Activated CD8-positive, alpha-beta T cell treated with anti-CD3 and anti-CD28 coated beads for 36 hours (primary cell): ENCODE measurements at regions of chr1 and their contacts with region 1.

Region 1: DNA sequence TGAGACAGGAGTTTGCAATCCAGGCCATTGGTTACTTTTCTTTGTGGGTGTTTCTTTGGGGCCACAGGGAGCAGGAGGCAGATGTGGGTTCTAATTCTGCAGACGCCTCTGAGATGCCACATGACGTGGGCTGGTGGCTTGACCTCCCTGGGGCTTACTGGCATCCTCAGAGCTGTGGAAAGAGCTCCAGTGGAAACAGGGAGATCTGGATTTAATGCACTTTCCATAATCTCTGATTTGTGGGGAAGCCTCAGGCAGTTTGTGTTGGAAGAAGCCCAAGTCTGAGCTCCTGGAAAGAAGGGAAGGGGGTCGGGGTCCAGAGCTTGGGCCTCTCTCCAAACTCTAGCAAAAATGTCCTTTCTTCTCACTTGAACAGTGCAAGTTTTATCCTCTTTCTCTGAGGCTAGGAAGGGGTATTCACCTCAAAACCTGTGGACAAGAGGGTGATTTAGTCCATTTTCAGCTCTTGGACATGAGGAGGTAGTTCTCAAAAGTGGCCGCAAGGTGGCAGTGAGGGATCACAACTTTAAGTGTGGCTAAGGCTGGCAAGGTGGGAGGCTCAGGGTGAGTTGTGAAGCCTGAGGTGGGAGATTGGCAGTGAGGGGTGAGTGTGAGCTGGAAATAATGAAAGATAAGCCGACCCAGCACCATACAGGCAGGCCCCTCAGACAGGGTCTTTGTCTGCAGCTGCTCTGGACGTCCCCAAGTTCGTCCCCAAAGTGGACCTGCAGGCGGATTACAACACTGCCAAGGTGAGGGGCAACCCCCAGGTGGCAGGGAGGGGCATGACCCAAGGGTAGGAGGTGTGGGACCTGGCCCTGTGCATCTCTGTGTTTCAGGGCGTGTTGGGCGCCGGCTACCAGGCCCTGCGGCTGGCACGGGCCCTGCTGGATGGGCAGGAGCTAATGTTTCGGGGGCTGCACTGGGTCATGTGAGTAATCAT is 9.2 kb downstream of the IKBKE start:
- DNase-seq: peak; percentile 91
- ATAC-seq: peak; percentile 87
- H3K4me3 Mint-ChIP-seq: no peak overlapping the region
- H3K27ac Mint-ChIP-seq: peak overlapping the region; percentile 60
- H3K4me1 Mint-ChIP-seq: peaks cover 33% of the 10 kb centered on the region
- H3K27me3 Mint-ChIP-seq: no peaks in the 10 kb centered on the region
- CTCF ChIP-seq: peak; percentile 79

Region 2: GRCh38 chr1:206442101-206442500 is 37.4 kb before region 1 on chr1:
- CTCF ChIA-PET with region 1: no interaction called
- POLR2A ChIA-PET with region 1: no interaction called
- intact Hi-C with region 1: no loop called
- DNase-seq: peak; percentile 31
- ATAC-seq: peak; percentile 55
- H3K4me3 Mint-ChIP-seq: no peak overlapping the region
- H3K27ac Mint-ChIP-seq: no peak overlapping the region
- H3K4me1 Mint-ChIP-seq: no peaks in the 10 kb centered on the region
- H3K27me3 Mint-ChIP-seq: no peaks in the 10 kb centered on the region
- CTCF ChIP-seq: no peak

Region 3: DNA sequence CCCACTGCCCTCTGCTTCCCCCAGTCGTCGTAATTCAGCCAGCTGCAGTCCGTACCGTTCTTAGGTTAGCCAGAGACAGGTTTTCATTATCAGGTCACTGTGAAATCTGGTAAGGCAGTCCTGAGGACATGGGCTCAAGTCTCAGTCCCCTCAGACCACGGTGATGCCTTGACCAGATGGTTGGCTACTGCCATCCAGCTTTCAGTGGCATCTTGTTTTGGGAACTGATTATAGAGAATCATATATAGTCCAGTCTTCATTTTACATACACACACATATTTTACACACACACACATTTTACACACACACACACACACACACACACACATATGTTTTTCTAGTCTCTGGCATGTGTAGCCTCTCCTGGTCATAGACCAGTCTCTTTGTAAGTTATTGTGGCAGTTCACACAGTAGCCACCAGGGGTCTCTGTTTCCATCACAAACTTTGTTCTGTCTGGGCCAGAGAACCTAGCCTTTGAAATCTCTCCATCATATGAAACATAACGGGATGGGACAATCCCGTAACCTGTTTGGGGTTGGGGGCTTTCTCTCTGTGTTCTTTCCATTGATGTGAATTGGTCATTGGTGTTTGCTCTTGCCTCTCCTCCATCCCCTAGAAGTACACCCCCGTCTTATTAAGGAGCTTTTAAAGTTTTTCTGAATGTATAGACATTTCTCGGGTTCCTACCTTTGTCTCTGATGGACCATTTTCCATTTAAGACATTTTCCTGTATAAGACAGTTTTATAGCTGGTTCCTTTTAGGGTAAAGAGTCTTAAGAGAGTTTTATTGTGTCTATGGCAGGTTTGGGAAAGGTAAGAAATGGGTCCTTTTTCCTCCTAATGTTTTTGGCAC is 17.6 kb before region 1 on chr1:
- CTCF ChIA-PET with region 1: interaction called, 112 read pairs
- POLR2A ChIA-PET with region 1: no interaction called
- intact Hi-C with region 1: no loop called
- DNase-seq: peak; percentile 91
- ATAC-seq: peak; percentile 79
- H3K4me3 Mint-ChIP-seq: no peak overlapping the region
- H3K27ac Mint-ChIP-seq: no peak overlapping the region
- H3K4me1 Mint-ChIP-seq: peaks cover 40% of the 10 kb centered on the region
- H3K27me3 Mint-ChIP-seq: no peaks in the 10 kb centered on the region
- CTCF ChIP-seq: peak; percentile 89

Region 4: DNA sequence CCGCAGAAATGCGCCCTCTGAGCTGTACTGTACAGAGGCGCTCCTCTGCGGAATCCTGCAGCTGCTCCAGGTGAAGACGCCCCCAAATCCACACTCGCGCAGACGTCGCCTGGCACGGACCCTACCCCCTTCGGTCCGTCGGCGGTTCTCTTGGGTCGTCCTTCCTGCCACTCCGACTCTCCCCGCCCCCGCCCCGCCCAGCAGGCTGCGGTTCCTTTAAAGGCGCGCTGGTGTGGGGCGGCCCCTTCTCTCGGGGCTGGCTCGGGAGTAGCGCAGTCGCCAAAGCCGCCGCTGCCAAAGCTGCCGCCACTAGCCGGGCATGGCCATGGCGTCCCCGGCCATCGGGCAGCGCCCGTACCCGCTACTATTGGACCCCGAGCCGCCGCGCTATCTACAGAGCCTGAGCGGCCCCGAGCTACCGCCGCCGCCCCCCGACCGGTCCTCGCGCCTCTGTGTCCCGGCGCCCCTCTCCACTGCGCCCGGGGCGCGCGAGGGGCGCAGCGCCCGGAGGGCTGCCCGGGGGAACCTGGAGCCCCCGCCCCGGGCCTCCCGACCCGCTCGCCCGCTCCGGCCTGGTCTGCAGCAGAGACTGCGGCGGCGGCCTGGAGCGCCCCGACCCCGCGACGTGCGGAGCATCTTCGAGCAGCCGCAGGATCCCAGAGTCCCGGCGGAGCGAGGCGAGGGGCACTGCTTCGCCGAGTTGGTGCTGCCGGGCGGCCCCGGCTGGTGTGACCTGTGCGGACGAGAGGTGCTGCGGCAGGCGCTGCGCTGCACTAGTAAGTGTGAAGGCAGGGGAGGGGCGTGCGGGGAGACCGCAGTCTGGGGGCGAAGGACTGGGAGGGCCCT is 28.1 kb after region 1 on chr1 and contains the start of gene RASSF5:
- CTCF ChIA-PET with region 1: interaction called, 15 read pairs
- POLR2A ChIA-PET with region 1: interaction called, 3 read pairs
- intact Hi-C with region 1: no loop called
- DNase-seq: peak; percentile 91
- ATAC-seq: peak; percentile 75
- H3K4me3 Mint-ChIP-seq: peak within 1 kb of the TSS; percentile 64
- H3K27ac Mint-ChIP-seq: peak within 1 kb of the TSS; percentile 10
- H3K4me1 Mint-ChIP-seq: peaks cover 46% of the 10 kb centered on the region
- H3K27me3 Mint-ChIP-seq: peaks cover 28% of the 10 kb centered on the region
- CTCF ChIP-seq: no peak
- total RNA-seq, gene RASSF5: 215 to 218 TPM

Region 5: DNA sequence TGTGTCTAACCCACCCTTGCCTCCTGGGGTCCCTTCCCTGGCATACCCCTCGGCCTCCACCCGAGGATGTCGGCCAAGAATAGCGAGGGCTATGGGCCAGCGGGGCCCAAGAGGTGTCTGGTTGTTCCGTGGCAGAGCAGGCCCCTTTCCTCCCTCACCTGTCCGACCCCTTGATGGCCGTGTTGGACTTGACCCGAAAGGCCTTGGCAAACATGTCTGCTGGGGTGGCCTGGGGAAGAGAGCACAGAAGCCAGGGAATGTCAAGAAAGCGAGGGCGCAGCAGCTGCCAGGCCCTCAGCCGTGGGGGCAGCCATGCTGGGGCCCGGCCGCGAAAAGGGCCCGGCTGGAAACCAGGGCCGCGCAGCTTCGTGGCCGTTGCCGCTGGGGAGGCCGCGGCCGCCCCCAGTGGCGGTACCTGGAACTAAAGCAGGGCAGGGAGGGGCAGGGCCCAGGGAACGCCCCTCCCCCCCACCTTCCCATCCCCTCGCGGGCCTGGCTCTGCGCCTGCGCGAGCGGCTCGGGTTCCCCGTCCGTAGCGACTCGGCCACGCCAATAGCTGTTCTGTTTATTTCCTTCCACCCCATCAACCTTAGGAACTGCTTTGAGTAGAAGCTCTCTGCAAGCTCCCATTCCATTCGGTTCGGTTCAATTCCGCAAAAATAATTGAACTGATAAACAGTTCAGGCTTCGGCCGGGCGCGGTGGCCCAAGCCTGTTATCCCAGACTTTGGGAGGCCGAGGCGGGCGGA is 132.8 kb after region 1 on chr1 and contains the start of gene EIF2D:
- CTCF ChIA-PET with region 1: interaction called, 12 read pairs
- POLR2A ChIA-PET with region 1: interaction called, 4 read pairs
- intact Hi-C with region 1: no loop called
- DNase-seq: peak; percentile 95
- ATAC-seq: peak; percentile 96
- H3K4me3 Mint-ChIP-seq: peak within 1 kb of the TSS; percentile 91
- H3K27ac Mint-ChIP-seq: peak within 1 kb of the TSS; percentile 92
- H3K4me1 Mint-ChIP-seq: peaks cover 39% of the 10 kb centered on the region
- H3K27me3 Mint-ChIP-seq: no peaks in the 10 kb centered on the region
- CTCF ChIP-seq: peak; percentile 89
- total RNA-seq, gene EIF2D: 100 to 102 TPM

Region 6: GRCh38 chr1:206658264-206658980 is 179.0 kb after region 1 on chr1:
- CTCF ChIA-PET with region 1: interaction called, 108 read pairs
- POLR2A ChIA-PET with region 1: no interaction called
- intact Hi-C with region 1: no loop called
- DNase-seq: peak; percentile 67
- ATAC-seq: peak; percentile 84
- H3K4me3 Mint-ChIP-seq: no peak overlapping the region
- H3K27ac Mint-ChIP-seq: peak overlapping the region; percentile 42
- H3K4me1 Mint-ChIP-seq: peaks cover 29% of the 10 kb centered on the region
- H3K27me3 Mint-ChIP-seq: peaks cover 31% of the 10 kb centered on the region
- CTCF ChIP-seq: peak; percentile 99

Region 7: DNA sequence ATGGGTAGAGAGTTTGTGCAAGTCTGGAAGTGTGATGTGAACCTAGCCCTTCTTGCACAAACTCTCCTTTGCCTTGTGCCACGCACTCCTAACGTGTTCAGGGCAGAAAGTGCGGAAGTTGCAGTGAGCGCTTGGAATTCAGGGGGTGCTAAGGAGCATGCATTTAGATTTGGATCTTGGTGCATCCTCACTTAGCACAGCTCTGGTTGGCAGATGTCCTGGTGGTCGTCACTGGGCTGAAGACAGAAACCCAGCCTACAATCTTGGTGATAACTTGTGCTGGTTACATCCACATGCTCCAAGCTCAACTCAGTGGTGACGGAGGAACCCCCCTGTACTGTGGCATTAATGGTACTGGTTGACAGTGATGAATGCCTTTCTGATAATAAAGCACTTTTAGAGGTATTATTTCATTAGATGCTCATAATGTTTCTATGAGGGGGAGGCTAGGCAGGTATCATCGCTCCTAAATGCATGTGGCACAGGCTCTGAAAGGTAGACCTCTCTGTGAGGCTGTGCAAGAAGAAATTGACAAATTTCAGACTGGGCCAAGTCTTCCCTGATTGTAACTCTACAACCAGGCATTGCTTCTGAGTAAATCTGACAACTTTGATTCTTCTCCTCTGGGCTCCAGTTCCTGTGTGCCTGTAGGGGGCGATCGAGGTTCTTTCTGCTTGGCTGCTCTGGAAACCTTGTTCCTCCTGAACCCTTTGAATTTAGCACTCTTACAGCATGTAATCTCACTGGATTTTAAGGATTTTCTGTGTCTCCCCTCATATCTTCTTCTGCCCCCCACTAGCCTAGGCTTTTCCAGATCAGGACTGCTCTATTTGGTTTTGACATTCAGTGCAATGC is 245.9 kb after region 1 on chr1:
- CTCF ChIA-PET with region 1: no interaction called
- POLR2A ChIA-PET with region 1: no interaction called
- intact Hi-C with region 1: no loop called
- DNase-seq: peak; percentile 83
- ATAC-seq: peak; percentile 57
- H3K4me3 Mint-ChIP-seq: no peak overlapping the region
- H3K27ac Mint-ChIP-seq: no peak overlapping the region
- H3K4me1 Mint-ChIP-seq: peaks cover 57% of the 10 kb centered on the region
- H3K27me3 Mint-ChIP-seq: no peaks in the 10 kb centered on the region
- CTCF ChIP-seq: peak; percentile 6